Posterior cingulate gyrus (tissue), 11 donors: ENCODE measurements at regions of chr2 and their contacts with region 1.

Region 1: GRCh38 chr2:97995734-97996624 is at the start of gene TMEM131:
- DNase-seq: peak; percentile 87 to 99 (median 94)

Region 2: GRCh38 chr2:98050070-98050469 is 54.1 kb after region 1 on chr2:
- intact Hi-C with region 1: no loop called
- DNase-seq: no peak

Region 3: DNA sequence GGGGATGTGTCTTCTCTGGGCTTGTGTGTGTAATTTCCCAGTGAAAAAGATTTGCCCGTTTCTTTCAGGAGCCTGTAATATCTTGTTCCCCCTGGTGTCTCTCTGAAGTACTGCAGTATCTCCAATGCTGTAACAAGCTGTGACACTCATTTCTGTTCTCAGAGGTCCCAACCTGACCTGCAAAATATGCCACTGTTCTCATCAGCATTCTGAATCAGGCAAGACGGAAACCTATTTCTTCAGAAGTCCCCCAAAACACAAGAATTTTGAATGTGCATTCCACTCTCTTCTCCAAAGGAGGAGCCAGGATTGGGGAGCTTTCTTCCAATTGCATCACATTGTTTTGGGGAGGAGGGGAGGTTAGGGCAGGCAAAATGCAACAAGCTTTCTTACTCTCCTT is 273.3 kb after region 1 on chr2:
- intact Hi-C with region 1: loop called (anchors 10 kb)
- DNase-seq: no peak

Region 4: GRCh38 chr2:98385050-98385699 is 389.2 kb after region 1 on chr2:
- intact Hi-C with region 1: loop called (anchors 10 kb)
- DNase-seq: peak; percentile 64 to 97 (median 85)